ENCODE measurements at regions of chr9 and their contacts with region 1.

Region 1: DNA sequence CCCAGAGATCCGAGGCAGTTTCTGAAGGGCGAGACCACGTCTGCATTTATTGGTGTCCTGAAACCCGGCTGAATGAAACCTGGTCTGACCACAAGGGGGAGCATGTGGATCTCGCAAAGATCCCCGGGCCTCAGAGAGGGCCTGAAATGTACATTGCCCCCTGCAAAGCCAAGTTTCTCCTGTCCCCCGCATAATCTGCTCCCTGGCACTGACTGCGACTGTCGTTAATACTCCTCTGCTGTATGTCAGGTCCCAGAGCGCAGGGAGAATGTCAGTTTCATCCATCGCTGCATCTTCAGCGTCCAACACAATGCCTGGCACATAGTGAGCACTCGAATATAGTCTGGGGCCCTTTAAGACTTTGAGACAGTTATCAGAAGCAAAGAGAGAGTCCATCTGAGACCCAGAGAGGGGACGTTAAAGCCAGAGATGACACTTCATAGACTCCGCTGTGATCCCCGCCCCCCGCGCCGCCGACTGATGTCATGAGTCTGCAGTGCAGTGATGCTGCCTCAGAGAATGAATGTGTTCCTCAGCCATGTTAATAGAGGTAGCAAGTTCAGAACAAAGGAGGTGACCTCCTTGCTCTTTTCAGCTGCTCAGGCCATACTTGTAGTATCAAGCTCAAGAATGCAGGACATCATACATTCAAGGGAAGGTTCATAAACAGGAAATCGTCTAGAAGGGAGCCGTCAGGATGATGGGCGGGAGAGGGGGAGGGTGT is 74.5 kb upstream of the BARHL1 start:
- DNase-seq: peak; percentile 45 to 77
- ATAC-seq: peak; percentile 74

Region 2: DNA sequence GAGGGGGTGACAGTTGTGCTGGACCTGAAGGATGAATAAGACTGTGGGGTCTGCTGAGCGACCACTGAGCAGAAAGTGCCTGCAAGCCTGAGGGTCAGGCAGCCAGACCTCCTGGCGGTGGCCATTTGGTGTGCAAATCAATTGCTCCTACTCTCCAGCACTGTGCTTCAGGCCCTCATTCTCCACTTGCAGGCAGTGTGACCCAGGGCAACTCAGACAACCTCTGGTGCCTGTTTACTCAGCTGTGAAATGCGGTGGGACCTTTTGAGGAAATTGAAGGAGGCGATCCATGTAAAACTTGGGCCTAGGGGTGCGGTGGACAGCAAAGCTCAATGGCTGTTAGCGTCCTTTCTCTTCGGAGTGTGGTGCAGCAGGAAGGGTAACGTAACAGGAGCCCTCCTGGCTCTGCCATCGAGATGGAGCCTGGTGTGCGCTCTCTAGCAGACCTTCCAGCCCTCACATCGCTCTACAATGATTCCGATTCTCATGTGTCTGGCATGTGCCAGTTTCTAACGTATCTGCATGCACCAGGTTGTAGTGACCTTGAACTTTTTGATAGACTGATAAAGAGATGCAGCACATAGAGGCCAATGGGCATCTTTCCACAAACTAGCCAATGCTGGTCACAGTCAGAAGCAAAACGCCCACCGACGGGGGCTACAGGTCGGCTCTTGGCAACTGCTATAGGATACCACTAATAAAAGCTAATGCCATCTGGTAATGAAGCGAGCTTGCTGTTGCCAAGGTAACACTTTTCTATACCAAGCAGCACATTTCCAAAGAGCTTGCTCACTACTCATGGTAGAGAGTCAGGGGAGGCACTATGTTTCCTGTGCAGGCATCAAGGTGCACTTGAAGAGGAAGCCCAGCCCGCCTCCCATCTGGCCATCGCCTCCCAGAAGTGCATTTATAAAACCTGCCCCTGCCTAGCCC is 608.3 kb before region 1 on chr9:
- intact Hi-C with region 1: no loop called
- DNase-seq: no peak
- ATAC-seq: no peak

Region 3: DNA sequence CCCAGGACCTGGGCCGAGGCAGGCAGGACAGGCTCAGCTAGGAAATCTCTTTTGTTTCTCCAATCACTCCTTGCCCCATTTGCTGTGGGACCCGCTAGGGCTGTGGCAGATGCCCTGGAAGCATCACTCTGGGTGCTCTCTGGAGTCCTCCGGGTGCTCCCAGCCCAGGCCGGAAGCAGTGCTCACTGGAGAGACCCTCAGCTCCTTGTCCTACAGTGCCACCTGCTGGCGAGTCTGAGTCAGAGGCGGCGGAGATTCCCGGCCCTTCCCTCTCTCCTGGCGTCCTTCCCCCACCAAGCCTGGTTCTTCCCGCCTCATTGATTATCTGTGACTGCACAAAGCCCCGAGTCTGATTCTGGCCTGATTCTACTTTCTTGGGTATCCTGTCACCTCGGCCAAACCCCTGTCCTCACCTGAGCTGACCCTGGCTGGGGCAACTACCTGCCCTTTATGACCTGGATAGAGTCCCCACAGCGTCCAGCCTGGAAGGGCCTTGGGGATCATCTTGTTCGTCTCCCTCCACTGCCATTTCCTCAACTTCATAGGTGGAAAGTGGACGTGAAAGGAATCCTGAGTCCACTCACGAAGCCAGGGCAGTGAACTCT is 67.2 kb after region 1 on chr9:
- intact Hi-C with region 1: loop called (anchors 2 to 10 kb)
- DNase-seq: peak; percentile 63 to 78
- ATAC-seq: peak; percentile 99

Region 4: GRCh38 chr9:132602207-132602606 is 94.3 kb after region 1 on chr9:
- intact Hi-C with region 1: no loop called
- DNase-seq: no peak
- ATAC-seq: no peak

Region 5: GRCh38 chr9:132800038-132800648 is 292.2 kb after region 1 on chr9:
- intact Hi-C with region 1: loop called (anchors 5 to 10 kb)
- DNase-seq: peak; percentile 69 to 78
- ATAC-seq: peak; percentile 73